Heart left ventricle (tissue), 16 donors: ENCODE measurements at regions of chr1 and their contacts with region 1.

Region 1: GRCh38 chr1:28736450-28737306 is at the start of gene YTHDF2:
- DNase-seq: peak; percentile 98 to 99 (median 98)
- ATAC-seq: peak; percentile 98 to 99 (median 99)
- H3K4me3 ChIP-seq: peak within 1 kb of the TSS; percentile 66 to 100 (median 95)
- H3K27ac ChIP-seq: peak within 1 kb of the TSS; percentile 77 to 98 (median 95)
- H3K4me1 ChIP-seq: peaks cover 5 to 48% (median 45%) of the 10 kb centered on the region in 12 donors
- H3K27me3 ChIP-seq: no peaks in the 10 kb centered on the region
- CTCF ChIP-seq: peak; percentile 90 to 99 (median 96)
- POLR2A ChIP-seq: peak in 1 of 2 donors; percentile 76
- total RNA-seq, gene YTHDF2: 31.3 to 56.3 (median 40.0) TPM

Region 2: DNA sequence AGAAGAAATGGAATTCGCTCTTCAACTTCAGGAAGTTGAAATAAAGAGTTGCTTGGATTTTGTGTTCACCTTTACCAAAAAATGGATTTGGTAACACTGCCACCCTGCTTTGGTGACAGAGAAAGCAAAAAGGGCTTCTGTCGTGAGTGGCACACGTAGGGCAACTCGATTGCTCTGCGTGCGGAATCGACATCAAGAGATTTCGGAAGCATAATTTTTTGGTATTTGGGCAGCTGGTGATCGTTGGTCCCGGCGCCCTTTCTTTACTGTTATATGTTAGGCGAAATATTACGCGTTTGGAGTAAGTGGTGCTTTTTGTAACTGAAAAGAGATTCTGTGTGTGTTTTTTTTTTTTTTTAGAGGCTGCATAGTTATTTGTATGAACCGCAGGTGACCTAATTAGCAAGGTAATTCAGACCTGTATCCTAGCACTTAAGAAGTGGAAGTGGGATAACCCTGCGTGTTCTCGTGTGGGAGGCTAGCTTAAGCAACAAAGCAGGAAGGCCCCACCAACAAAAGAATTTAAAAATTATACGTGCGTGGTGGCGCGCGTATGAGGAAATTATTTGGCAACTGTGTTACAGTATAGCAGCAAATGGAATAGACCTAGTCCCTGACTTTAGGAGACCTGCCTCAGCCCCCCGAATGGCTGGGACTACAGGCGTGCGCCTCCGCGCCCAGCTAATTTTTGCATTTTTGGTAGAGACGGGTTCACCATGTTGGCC is 88.0 kb before region 1 on chr1 and contains the start of gene RNU11:
- intact Hi-C with region 1: loop called (anchors 2 to 5 kb)
- DNase-seq: peak; percentile 86 to 89 (median 87)
- ATAC-seq: peak; percentile 82 to 87 (median 86)
- H3K4me3 ChIP-seq: peak within 1 kb of the TSS in 11 of 12 donors; percentile 9 to 58 (median 49)
- H3K27ac ChIP-seq: peak within 1 kb of the TSS; percentile 87 to 100 (median 92)
- H3K4me1 ChIP-seq: peaks cover 0 to 33% (median 18%) of the 10 kb centered on the region in 12 donors
- H3K27me3 ChIP-seq: no peaks in the 10 kb centered on the region
- CTCF ChIP-seq: peak in 1 of 12 donors; percentile 14
- POLR2A ChIP-seq: peak; percentile 68 to 92
- total RNA-seq, gene RNU11: not detected

Region 3: GRCh38 chr1:28668191-28668955 is 68.3 kb before region 1 on chr1 and contains the start of gene GMEB1:
- intact Hi-C with region 1: loop called in 4 of 10 experiments (anchors 2 to 5 kb)
- DNase-seq: peak; percentile 88 to 94 (median 89)
- ATAC-seq: peak; percentile 79 to 93 (median 92)
- H3K4me3 ChIP-seq: peak within 1 kb of the TSS; percentile 96 to 100 (median 99)
- H3K27ac ChIP-seq: peak within 1 kb of the TSS; percentile 98 to 100 (median 99)
- H3K4me1 ChIP-seq: peaks cover 0 to 23% (median 18%) of the 10 kb centered on the region in 12 donors
- H3K27me3 ChIP-seq: no peaks in the 10 kb centered on the region
- CTCF ChIP-seq: peak in 2 of 12 donors; percentile 9 to 10
- POLR2A ChIP-seq: no peak
- total RNA-seq, gene GMEB1: 4.3 to 8.5 (median 6.1) TPM

Region 4: GRCh38 chr1:29181413-29182225 is 444.9 kb after region 1 on chr1 and contains the start of gene SRSF4:
- intact Hi-C with region 1: loop called in 1 of 10 experiments (anchors 5 kb)
- DNase-seq: peak; percentile 99 to 100 (median 99)
- ATAC-seq: peak; percentile 92 to 97 (median 96)
- H3K4me3 ChIP-seq: peak within 1 kb of the TSS; percentile 74 to 100 (median 98)
- H3K27ac ChIP-seq: peak within 1 kb of the TSS; percentile 85 to 100 (median 100)
- H3K4me1 ChIP-seq: peaks cover 11 to 51% (median 45%) of the 10 kb centered on the region in 12 donors
- H3K27me3 ChIP-seq: no peaks in the 10 kb centered on the region
- CTCF ChIP-seq: peak; percentile 57 to 96 (median 84)
- POLR2A ChIP-seq: peak in 1 of 2 donors; percentile 87
- total RNA-seq, gene SRSF4: 40.4 to 54.6 (median 49.0) TPM